GM12878 (cell line): ENCODE measurements at regions of chr4 and their contacts with region 1.

Region 1: GRCh38 chr4:138870737-138871554 is 144.6 kb upstream of the NOCT start:
- DNase-seq: peak; percentile 7
- ATAC-seq: peak; percentile 83
- H3K4me3 ChIP-seq: no peak overlapping the region
- H3K27ac ChIP-seq: no peak overlapping the region
- H3K4me1 ChIP-seq: no peaks in the 10 kb centered on the region
- H3K27me3 ChIP-seq: no peaks in the 10 kb centered on the region
- CTCF ChIP-seq: peak; percentile 75 to 84 (median 82)
- EP300 ChIP-seq: no peak
- POLR2A ChIP-seq: no peak
- RAD21 ChIP-seq: peak; percentile 85

Region 2: GRCh38 chr4:137735561-137736104 is 1135.3 kb before region 1 on chr4:
- CTCF ChIA-PET with region 1: no interaction called
- POLR2A ChIA-PET with region 1: no interaction called
- RAD21 ChIA-PET with region 1: no interaction called
- SMC1A ChIA-PET with region 1: no interaction called
- in situ Hi-C with region 1: no loop called
- intact Hi-C with region 1: loop called (anchors 5 kb)
- DNase-seq: no peak
- ATAC-seq: peak; percentile 75
- H3K4me3 ChIP-seq: no peak overlapping the region
- H3K27ac ChIP-seq: no peak overlapping the region
- H3K4me1 ChIP-seq: no peaks in the 10 kb centered on the region
- H3K27me3 ChIP-seq: no peaks in the 10 kb centered on the region
- CTCF ChIP-seq: peak in 1 of 3 experiments; percentile 23; a peak in 1 of 6 replicates
- EP300 ChIP-seq: no peak
- POLR2A ChIP-seq: no peak
- RAD21 ChIP-seq: no peak

Region 3: DNA sequence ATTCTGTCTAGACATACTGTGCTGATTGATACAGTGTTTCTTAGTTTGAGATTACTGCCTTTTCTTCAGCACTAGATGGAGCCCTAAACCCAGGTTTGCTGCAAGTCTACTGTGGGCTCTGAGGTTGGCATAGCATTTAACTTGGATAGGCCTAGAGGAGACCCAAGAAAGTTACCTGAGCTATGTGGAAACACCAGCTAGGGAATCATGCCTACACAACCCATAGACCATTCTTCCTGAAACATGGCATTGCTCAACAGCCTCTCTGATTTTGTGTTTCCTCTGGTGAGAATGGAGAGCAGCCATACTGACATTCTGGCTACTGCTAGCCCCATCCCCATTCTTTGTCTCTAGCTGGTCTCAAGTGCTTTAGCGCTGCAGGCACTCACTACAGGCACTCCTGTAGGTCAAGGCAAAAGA is 1051.0 kb before region 1 on chr4:
- CTCF ChIA-PET with region 1: interaction called, 18 read pairs
- POLR2A ChIA-PET with region 1: no interaction called
- RAD21 ChIA-PET with region 1: interaction called, 14 read pairs
- SMC1A ChIA-PET with region 1: interaction called, 8 read pairs
- in situ Hi-C with region 1: no loop called
- intact Hi-C with region 1: loop called (anchors 1 kb)
- DNase-seq: peak; percentile 1
- ATAC-seq: peak; percentile 97
- H3K4me3 ChIP-seq: no peak overlapping the region
- H3K27ac ChIP-seq: no peak overlapping the region
- H3K4me1 ChIP-seq: no peaks in the 10 kb centered on the region
- H3K27me3 ChIP-seq: no peaks in the 10 kb centered on the region
- CTCF ChIP-seq: peak; percentile 62 to 77 (median 66)
- EP300 ChIP-seq: no peak
- POLR2A ChIP-seq: no peak
- RAD21 ChIP-seq: peak; percentile 89

Region 4: GRCh38 chr4:138035781-138036258 is 835.1 kb before region 1 on chr4:
- CTCF ChIA-PET with region 1: interaction called, 4 read pairs
- POLR2A ChIA-PET with region 1: no interaction called
- RAD21 ChIA-PET with region 1: interaction called, 7 read pairs
- SMC1A ChIA-PET with region 1: interaction called, 4 read pairs
- in situ Hi-C with region 1: no loop called
- intact Hi-C with region 1: loop called (anchors 1 kb)
- DNase-seq: peak; percentile 69
- ATAC-seq: peak; percentile 100
- H3K4me3 ChIP-seq: no peak overlapping the region
- H3K27ac ChIP-seq: no peak overlapping the region
- H3K4me1 ChIP-seq: no peaks in the 10 kb centered on the region
- H3K27me3 ChIP-seq: no peaks in the 10 kb centered on the region
- CTCF ChIP-seq: peak; percentile 44 to 71 (median 64); a peak in 5 of 6 replicates
- EP300 ChIP-seq: 0 out of 4 replicates have a peak, but pooled peaks of 1 of the 2 experiments have one; percentile 43
- POLR2A ChIP-seq: no peak
- RAD21 ChIP-seq: peak; percentile 86

Region 5: GRCh38 chr4:138576684-138577083 is 294.3 kb before region 1 on chr4:
- CTCF ChIA-PET with region 1: interaction called, 7 read pairs
- POLR2A ChIA-PET with region 1: no interaction called
- RAD21 ChIA-PET with region 1: interaction called, 3 read pairs
- SMC1A ChIA-PET with region 1: interaction called, 3 read pairs
- in situ Hi-C with region 1: no loop called
- intact Hi-C with region 1: loop called (anchors 5 kb)
- DNase-seq: no peak
- ATAC-seq: peak; percentile 71
- H3K4me3 ChIP-seq: no peak overlapping the region
- H3K27ac ChIP-seq: no peak overlapping the region
- H3K4me1 ChIP-seq: no peaks in the 10 kb centered on the region
- H3K27me3 ChIP-seq: no peaks in the 10 kb centered on the region
- CTCF ChIP-seq: peak in 2 of 3 experiments; percentile 34 to 41; a peak in 4 of 6 replicates
- EP300 ChIP-seq: no peak
- POLR2A ChIP-seq: no peak
- RAD21 ChIP-seq: peak; percentile 60

Region 6: DNA sequence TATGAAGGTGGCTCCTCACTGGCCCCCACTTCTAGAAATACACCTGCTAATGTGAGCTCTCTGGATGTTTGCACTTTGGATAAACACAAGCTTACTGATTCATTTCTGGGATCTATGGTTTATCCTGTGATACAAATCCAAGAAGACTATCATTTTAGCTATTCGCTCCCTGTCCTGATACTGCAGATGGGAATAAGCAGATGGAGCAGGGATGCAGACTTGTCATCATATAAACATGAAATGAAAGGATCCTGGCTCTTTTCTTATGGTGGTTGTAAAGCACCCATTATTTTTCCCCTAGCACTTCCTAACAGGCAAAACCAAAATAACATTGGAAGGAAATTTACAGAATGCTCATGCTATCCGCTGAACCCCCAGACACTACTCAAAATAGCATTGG is 18.3 kb before region 1 on chr4:
- CTCF ChIA-PET with region 1: no interaction called
- POLR2A ChIA-PET with region 1: no interaction called
- RAD21 ChIA-PET with region 1: no interaction called
- SMC1A ChIA-PET with region 1: no interaction called
- in situ Hi-C with region 1: no loop called
- intact Hi-C with region 1: no loop called
- DNase-seq: no peak
- ATAC-seq: no peak
- H3K4me3 ChIP-seq: no peak overlapping the region
- H3K27ac ChIP-seq: no peak overlapping the region
- H3K4me1 ChIP-seq: no peaks in the 10 kb centered on the region
- H3K27me3 ChIP-seq: peaks cover 0 to 1% of the 10 kb centered on the region in 2 experiments; a peak in 2 of 4 replicates
- CTCF ChIP-seq: no peak
- EP300 ChIP-seq: no peak
- POLR2A ChIP-seq: no peak
- RAD21 ChIP-seq: no peak

Region 7: GRCh38 chr4:138919094-138919936 is 48.4 kb after region 1 on chr4:
- CTCF ChIA-PET with region 1: interaction called, 14 read pairs
- POLR2A ChIA-PET with region 1: no interaction called
- RAD21 ChIA-PET with region 1: interaction called, 4 read pairs
- SMC1A ChIA-PET with region 1: interaction called, 8 read pairs
- in situ Hi-C with region 1: no loop called
- intact Hi-C with region 1: loop called (anchors 1 kb)
- DNase-seq: peak; percentile 11
- ATAC-seq: peak; percentile 98
- H3K4me3 ChIP-seq: no peak overlapping the region
- H3K27ac ChIP-seq: no peak overlapping the region
- H3K4me1 ChIP-seq: no peaks in the 10 kb centered on the region
- H3K27me3 ChIP-seq: no peaks in the 10 kb centered on the region
- CTCF ChIP-seq: peak; percentile 82 to 94 (median 88)
- EP300 ChIP-seq: no peak
- POLR2A ChIP-seq: no peak
- RAD21 ChIP-seq: peak; percentile 84